HEK293 (cell line): ENCODE measurements at regions of chr10 and their contacts with region 1.

Region 1: GRCh38 chr10:123154092-123154921 is at the start of gene BUB3:
- H3K4me3 ChIP-seq: peak within 1 kb of the TSS; percentile 93
- H3K27ac ChIP-seq: peak within 1 kb of the TSS; percentile 95
- H3K4me1 ChIP-seq: peaks cover 13% of the 10 kb centered on the region
- CTCF ChIP-seq: peak; percentile 62; the same call in 1 of the 2 replicates

Region 2: DNA sequence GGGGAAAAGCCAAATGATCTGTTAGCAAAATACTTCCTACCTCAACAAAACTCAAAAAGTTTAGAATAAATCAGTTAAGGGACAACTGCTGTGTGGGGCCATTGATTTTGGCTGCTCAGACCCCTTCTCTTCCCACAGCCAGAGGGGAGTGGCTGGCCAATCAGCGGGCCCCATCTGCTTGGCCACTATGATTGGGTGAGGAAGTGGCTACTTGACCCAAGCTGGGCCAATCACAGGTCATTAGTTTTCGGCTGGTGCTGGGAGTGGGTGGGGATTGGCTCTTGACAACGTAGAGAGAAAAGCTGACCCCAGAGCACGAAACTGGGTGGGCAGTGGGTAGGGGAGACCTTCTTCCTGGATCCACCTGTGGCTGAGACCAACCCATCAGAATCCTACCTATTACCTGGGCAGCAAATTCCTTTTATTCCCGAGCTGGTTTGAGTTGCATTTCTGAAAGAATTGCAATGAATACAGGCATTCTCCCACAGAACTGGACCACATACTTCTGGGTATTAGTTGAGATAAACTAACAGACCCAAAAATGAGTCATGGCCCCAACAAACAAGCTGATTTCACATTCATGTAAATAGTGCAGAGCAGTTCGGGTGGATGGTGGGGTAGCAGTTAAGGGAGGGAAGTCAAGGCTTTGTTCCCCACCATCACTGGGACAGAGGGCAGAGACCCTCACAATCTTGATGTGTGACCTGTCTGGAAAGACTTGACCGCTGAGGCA is 54.1 kb before region 1 on chr10:
- CTCF ChIA-PET with region 1: no interaction called
- POLR2A ChIA-PET with region 1: no interaction called
- H3K4me3 ChIP-seq: no peak overlapping the region
- H3K27ac ChIP-seq: no peak overlapping the region
- H3K4me1 ChIP-seq: no peaks in the 10 kb centered on the region
- CTCF ChIP-seq: no peak

Region 3: GRCh38 chr10:123165445-123166072 is 11.3 kb after region 1 on chr10:
- CTCF ChIA-PET with region 1: interaction called, 5 read pairs
- POLR2A ChIA-PET with region 1: interaction called, 10 read pairs
- H3K4me3 ChIP-seq: no peak overlapping the region
- H3K27ac ChIP-seq: no peak overlapping the region
- H3K4me1 ChIP-seq: 0 out of 2 replicates have a peak, but pooled peaks cover 2% of the 10 kb centered on the region
- CTCF ChIP-seq: no peak

Region 4: GRCh38 chr10:123200510-123200909 is 46.2 kb after region 1 on chr10:
- CTCF ChIA-PET with region 1: no interaction called
- POLR2A ChIA-PET with region 1: no interaction called
- H3K4me3 ChIP-seq: no peak overlapping the region
- H3K27ac ChIP-seq: no peak overlapping the region
- H3K4me1 ChIP-seq: no peaks in the 10 kb centered on the region
- CTCF ChIP-seq: no peak

Region 5: GRCh38 chr10:123257904-123258456 is 103.7 kb after region 1 on chr10:
- CTCF ChIA-PET with region 1: no interaction called
- POLR2A ChIA-PET with region 1: no interaction called
- H3K4me3 ChIP-seq: no peak overlapping the region
- H3K27ac ChIP-seq: no peak overlapping the region
- H3K4me1 ChIP-seq: no peaks in the 10 kb centered on the region
- CTCF ChIP-seq: no peak